GM12878 (cell line): ENCODE measurements at regions of chr17 and their contacts with region 1.

Region 1: DNA sequence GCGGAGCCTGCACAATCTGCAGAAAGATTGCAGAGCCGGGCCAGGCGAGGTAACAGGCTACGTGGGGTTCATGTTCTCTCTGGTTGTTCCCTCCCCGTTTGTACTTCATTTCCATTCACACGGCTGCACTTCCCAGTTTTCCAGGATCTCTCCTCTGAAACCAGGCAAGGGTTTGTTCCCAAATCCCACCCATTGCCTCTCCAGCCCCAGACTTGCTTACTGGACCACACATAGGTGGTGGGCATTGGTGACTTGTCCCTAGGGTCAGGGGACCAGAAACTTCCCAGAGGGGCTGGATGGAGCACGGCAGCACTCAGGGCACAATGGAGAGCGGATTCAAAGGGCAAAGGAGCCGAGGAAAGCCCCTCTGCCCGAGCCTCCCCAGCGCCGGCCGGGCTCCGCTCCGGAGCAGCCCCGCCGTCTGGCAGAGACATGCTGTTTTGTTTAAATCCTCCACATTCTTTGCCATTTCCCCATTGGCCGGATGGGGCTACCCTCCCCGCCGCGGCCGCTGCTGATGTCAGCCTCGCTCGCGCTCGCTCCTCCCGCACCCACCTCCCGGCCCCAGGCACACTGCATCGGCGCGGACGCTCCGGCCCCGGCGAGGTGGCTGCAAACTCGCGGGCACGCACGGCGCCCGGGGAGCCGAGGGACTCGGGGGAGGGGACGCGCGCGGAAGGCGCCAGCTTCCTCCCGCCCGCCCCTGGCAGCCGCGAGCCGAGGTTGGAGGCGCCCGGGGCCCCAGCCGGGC is at the start of gene PITPNC1:
- DNase-seq: no peak
- ATAC-seq: peak; percentile 84
- H3K4me3 ChIP-seq: peak within 1 kb of the TSS; percentile 88
- H3K27ac ChIP-seq: peak within 1 kb of the TSS; percentile 87
- H3K4me1 ChIP-seq: no peaks in the 10 kb centered on the region; the same call in 1 of the 2 replicates
- H3K27me3 ChIP-seq: no peaks in the 10 kb centered on the region
- CTCF ChIP-seq: no peak
- EP300 ChIP-seq: no peak
- POLR2A ChIP-seq: peak; percentile 82
- RAD21 ChIP-seq: no peak
- polyA plus RNA-seq, gene PITPNC1: 12.2 to 24.6 TPM

Region 2: DNA sequence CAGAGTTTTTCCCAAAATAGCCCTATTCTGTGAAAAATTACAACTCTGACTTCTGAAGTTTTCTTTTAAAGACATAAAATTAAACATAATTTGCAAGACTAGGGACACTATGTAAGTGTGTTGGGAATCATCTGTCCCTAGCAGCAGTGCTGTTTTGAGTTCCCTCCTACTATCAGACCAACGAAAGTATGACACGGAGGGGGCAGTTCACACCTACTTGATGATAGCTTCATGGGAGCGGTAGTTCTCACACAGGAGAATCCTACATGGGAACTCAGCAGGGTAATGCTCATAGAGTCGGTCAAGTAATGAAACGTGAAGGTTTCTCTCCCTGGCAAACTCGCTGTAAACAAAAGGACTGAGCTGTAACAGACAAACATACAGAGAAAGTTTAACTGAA is 228.6 kb before region 1 on chr17:
- CTCF ChIA-PET with region 1: no interaction called
- POLR2A ChIA-PET with region 1: no interaction called
- RAD21 ChIA-PET with region 1: no interaction called
- SMC1A ChIA-PET with region 1: no interaction called
- in situ Hi-C with region 1: no loop called
- intact Hi-C with region 1: no loop called
- DNase-seq: no peak
- ATAC-seq: no peak
- H3K4me3 ChIP-seq: no peak overlapping the region
- H3K27ac ChIP-seq: no peak overlapping the region
- H3K4me1 ChIP-seq: no peaks in the 10 kb centered on the region
- H3K27me3 ChIP-seq: no peaks in the 10 kb centered on the region
- CTCF ChIP-seq: no peak
- EP300 ChIP-seq: no peak
- POLR2A ChIP-seq: no peak
- RAD21 ChIP-seq: no peak

Region 3: DNA sequence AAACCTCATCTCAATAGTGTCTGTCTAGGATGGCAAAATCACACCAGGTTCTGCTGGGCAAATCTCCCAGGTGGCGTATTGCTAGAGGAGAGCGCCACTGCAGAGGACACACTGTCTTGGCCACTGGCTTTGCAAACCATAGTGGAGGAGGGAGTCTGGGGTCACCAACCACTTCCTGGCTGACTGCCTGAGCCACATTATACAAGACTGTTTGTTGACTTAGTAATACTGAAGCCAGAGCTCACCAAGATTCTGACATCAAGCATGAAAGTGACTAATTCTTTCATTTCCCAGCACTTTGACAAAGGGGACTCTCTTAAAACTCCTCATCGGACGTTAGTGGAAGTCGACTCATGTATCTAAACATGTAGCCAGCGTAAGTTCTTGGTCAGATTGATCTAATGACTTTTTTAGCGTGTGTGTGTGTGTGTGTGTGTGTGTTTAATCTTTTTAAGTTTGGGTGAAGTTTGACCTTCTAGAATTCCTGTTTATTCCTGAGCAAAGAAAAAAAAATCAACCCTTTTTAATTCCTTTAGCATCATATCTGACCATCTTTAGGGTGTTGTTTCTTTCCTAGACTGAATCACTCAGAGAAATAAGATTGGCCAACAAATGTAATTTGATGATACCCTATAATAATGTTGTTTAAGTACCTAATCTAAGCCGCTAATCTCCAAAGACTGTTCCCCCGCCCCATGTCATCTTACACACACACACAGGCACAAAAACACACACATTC is 13.9 kb after region 1 on chr17:
- CTCF ChIA-PET with region 1: interaction called, 24 read pairs
- POLR2A ChIA-PET with region 1: interaction called, 4 read pairs
- RAD21 ChIA-PET with region 1: interaction called, 8 read pairs
- SMC1A ChIA-PET with region 1: interaction called, 9 read pairs
- in situ Hi-C with region 1: no loop called
- intact Hi-C with region 1: loop called (anchors 1 kb)
- DNase-seq: peak; percentile 87
- ATAC-seq: peak; percentile 97
- H3K4me3 ChIP-seq: peak overlapping the region; percentile 24; the same call in 1 of the 2 replicates
- H3K27ac ChIP-seq: peak overlapping the region; percentile 80
- H3K4me1 ChIP-seq: peaks cover 36% of the 10 kb centered on the region
- H3K27me3 ChIP-seq: no peaks in the 10 kb centered on the region
- CTCF ChIP-seq: peak in 1 of 3 experiments; percentile 8; a peak in 1 of 6 replicates
- EP300 ChIP-seq: peak; percentile 78 to 85; a peak in 3 of 4 replicates
- POLR2A ChIP-seq: peak; percentile 41; the same call in 1 of the 2 replicates
- RAD21 ChIP-seq: peak; percentile 9; the same call in 1 of the 2 replicates

Region 4: DNA sequence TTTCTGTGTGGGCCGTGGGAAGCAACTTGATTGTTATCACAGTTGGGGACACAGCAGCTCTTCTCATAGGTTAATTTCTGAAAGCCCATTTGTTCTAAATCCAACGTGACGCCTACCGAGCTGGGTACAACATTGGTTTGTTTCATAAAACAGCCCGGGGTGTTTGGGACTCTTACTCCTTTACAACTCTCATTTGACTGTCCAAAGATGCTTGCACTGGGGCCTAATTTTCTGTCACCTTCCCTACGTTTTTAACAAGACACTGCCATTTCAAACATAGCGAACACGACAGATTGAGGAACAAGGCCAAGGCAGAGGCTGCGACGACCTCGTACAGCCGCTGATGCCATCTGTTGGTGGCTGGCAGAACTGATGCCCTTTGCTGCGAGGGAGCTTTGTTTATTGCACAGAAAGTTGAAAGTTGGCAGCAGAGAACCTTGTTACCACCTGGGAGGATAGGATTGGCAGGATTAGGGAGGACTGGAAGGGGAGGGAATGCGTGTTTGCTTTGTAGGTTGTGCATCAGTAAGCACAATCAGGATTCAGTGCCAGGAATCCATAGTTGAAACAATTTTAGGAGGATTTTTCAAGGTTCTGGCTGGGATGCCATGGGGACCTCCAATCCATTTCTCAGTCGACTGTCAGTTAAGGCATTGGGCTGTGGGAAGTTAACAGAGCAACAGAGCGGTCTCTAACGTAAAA is 98.5 kb after region 1 on chr17:
- CTCF ChIA-PET with region 1: interaction called, 291 read pairs
- POLR2A ChIA-PET with region 1: interaction called, 5 read pairs
- RAD21 ChIA-PET with region 1: interaction called, 74 read pairs
- SMC1A ChIA-PET with region 1: interaction called, 100 read pairs
- in situ Hi-C with region 1: no loop called
- intact Hi-C with region 1: loop called (anchors 1 kb)
- DNase-seq: peak; percentile 53
- ATAC-seq: peak; percentile 98
- H3K4me3 ChIP-seq: no peak overlapping the region; the same call in 1 of the 2 replicates
- H3K27ac ChIP-seq: peak overlapping the region; percentile 36; the same call in 1 of the 2 replicates
- H3K4me1 ChIP-seq: peaks cover 21% of the 10 kb centered on the region
- H3K27me3 ChIP-seq: no peaks in the 10 kb centered on the region
- CTCF ChIP-seq: peak; percentile 95 to 99 (median 96); a peak in 5 of 6 replicates
- EP300 ChIP-seq: no peak
- POLR2A ChIP-seq: no peak
- RAD21 ChIP-seq: peak; percentile 96

Region 5: GRCh38 chr17:67569873-67570272 is 193.0 kb after region 1 on chr17:
- CTCF ChIA-PET with region 1: interaction called, 17 read pairs
- POLR2A ChIA-PET with region 1: interaction called, 3 read pairs
- RAD21 ChIA-PET with region 1: interaction called, 8 read pairs
- SMC1A ChIA-PET with region 1: interaction called, 17 read pairs
- in situ Hi-C with region 1: no loop called
- intact Hi-C with region 1: loop called (anchors 5 kb)
- DNase-seq: peak; percentile 57
- ATAC-seq: peak; percentile 49
- H3K4me3 ChIP-seq: peak overlapping the region; percentile 57
- H3K27ac ChIP-seq: peak overlapping the region; percentile 88
- H3K4me1 ChIP-seq: peaks cover 60% of the 10 kb centered on the region
- H3K27me3 ChIP-seq: no peaks in the 10 kb centered on the region
- CTCF ChIP-seq: no peak
- EP300 ChIP-seq: peak; percentile 58 to 69; a peak in 2 of 4 replicates
- POLR2A ChIP-seq: no peak
- RAD21 ChIP-seq: no peak

Region 6: DNA sequence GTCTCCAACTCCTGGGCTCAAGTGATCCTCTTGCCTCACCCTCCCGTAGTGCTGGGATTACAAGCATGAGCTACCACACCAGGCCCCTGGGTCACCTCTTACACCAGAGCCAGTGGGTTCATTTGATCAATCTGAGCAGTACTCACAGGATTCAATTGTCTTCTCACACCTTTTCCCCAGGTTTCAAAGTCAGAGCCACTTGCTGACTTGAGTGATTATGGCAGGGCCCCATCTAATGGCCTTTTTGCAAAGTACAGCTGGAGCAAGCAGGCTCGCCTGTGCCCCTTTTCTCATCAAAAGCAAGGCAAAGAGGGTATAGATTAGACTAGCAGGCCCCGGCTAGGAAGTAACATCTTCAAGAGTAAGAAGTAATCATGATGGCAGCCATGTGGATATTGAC is 226.0 kb after region 1 on chr17:
- CTCF ChIA-PET with region 1: interaction called, 163 read pairs
- POLR2A ChIA-PET with region 1: interaction called, 6 read pairs
- RAD21 ChIA-PET with region 1: interaction called, 58 read pairs
- SMC1A ChIA-PET with region 1: interaction called, 58 read pairs
- in situ Hi-C with region 1: loop called (anchors 5 kb)
- intact Hi-C with region 1: loop called (anchors 2 kb)
- DNase-seq: no peak
- ATAC-seq: peak; percentile 97
- H3K4me3 ChIP-seq: no peak overlapping the region
- H3K27ac ChIP-seq: peak overlapping the region; percentile 46
- H3K4me1 ChIP-seq: peaks cover 33% of the 10 kb centered on the region
- H3K27me3 ChIP-seq: no peaks in the 10 kb centered on the region
- CTCF ChIP-seq: peak; percentile 70 to 87 (median 73); a peak in 5 of 6 replicates
- EP300 ChIP-seq: no peak
- POLR2A ChIP-seq: no peak
- RAD21 ChIP-seq: peak; percentile 95

Region 7: DNA sequence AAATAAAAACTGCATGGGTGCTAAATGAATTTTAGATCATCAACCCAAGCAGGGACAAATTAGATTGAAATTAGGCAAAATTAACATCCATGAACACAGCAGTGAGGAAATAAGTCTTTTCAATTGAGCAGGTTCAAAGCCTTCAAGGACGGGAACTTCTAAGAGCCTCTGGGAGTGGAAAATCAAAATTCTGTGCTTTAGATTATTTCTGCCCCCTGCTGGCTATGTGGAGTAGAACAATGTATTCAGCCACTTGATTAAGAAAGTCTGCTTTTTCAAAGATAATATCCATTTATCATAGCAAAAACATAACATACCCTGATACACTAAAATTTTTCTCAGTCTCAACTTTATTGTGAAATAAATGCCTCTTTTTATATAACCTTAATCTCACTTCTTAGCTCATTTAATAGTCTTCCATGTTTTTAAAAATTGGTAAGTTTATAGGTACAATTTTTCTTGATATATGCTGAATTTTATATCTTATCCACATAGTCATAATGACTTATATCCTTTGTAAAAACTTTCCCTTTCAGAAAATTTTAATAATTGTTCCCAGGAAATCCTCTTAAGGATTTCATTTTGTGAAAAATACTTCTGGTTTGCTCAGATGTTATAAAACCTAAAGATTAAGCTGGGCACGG is 312.7 kb after region 1 on chr17:
- CTCF ChIA-PET with region 1: interaction called, 84 read pairs
- POLR2A ChIA-PET with region 1: interaction called, 9 read pairs
- RAD21 ChIA-PET with region 1: interaction called, 30 read pairs
- SMC1A ChIA-PET with region 1: interaction called, 15 read pairs
- in situ Hi-C with region 1: loop called (anchors 5 kb)
- intact Hi-C with region 1: loop called (anchors 2 kb)
- DNase-seq: peak; percentile 37
- ATAC-seq: peak; percentile 82
- H3K4me3 ChIP-seq: no peak overlapping the region
- H3K27ac ChIP-seq: peak overlapping the region; percentile 24; the same call in 1 of the 2 replicates
- H3K4me1 ChIP-seq: peaks cover 10% of the 10 kb centered on the region
- H3K27me3 ChIP-seq: no peaks in the 10 kb centered on the region
- CTCF ChIP-seq: peak; percentile 63 to 73 (median 72)
- EP300 ChIP-seq: no peak
- POLR2A ChIP-seq: no peak
- RAD21 ChIP-seq: peak; percentile 85